ENCODE measurements at regions of chr4 and their contacts with region 1.

Region 1: DNA sequence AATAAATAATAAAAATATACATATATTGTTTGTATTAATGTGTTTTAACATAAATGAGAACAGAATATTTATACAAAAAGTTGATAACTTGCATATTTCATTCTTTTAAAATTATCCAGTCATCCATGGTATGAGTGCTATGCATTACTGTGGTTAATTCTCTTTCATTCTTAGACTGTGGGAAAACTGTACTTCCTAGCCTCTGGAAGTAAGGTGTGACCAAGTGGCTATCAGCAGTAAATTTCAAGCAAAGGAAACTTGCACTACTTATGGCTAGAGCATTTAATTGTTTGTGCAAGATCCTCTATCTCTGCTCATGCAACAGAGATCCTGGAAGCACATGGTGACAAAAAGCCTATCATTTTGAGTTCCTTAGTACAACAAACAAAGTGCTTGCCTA is 1054.5 kb upstream of the PABPC4L start:
- DNase-seq: no peak
- H3K4me3 ChIP-seq: no peak overlapping the region
- H3K27ac ChIP-seq: no peak overlapping the region
- H3K4me1 ChIP-seq: no peaks in the 10 kb centered on the region
- H3K27me3 ChIP-seq: no peaks in the 10 kb centered on the region
- CTCF ChIP-seq: no peak
- POLR2A ChIP-seq: no peak

Region 2: GRCh38 chr4:135492439-135492838 is 236.3 kb after region 1 on chr4:
- intact Hi-C with region 1: loop called (anchors 10 kb)
- DNase-seq: no peak
- H3K4me3 ChIP-seq: no peak overlapping the region
- H3K27ac ChIP-seq: no peak overlapping the region
- H3K4me1 ChIP-seq: no peaks in the 10 kb centered on the region
- H3K27me3 ChIP-seq: no peaks in the 10 kb centered on the region
- CTCF ChIP-seq: no peak
- POLR2A ChIP-seq: no peak

Region 3: GRCh38 chr4:137070614-137071013 is 1814.5 kb after region 1 on chr4:
- intact Hi-C with region 1: loop called (anchors 10 kb)
- DNase-seq: no peak
- H3K4me3 ChIP-seq: no peak overlapping the region
- H3K27ac ChIP-seq: no peak overlapping the region
- H3K4me1 ChIP-seq: no peaks in the 10 kb centered on the region
- H3K27me3 ChIP-seq: no peaks in the 10 kb centered on the region
- CTCF ChIP-seq: no peak
- POLR2A ChIP-seq: no peak

Measured in breast epithelium (tissue), 4 donors.